BJ (cell line): ENCODE measurements at regions of chr10 and their contacts with region 1.

Region 1: DNA sequence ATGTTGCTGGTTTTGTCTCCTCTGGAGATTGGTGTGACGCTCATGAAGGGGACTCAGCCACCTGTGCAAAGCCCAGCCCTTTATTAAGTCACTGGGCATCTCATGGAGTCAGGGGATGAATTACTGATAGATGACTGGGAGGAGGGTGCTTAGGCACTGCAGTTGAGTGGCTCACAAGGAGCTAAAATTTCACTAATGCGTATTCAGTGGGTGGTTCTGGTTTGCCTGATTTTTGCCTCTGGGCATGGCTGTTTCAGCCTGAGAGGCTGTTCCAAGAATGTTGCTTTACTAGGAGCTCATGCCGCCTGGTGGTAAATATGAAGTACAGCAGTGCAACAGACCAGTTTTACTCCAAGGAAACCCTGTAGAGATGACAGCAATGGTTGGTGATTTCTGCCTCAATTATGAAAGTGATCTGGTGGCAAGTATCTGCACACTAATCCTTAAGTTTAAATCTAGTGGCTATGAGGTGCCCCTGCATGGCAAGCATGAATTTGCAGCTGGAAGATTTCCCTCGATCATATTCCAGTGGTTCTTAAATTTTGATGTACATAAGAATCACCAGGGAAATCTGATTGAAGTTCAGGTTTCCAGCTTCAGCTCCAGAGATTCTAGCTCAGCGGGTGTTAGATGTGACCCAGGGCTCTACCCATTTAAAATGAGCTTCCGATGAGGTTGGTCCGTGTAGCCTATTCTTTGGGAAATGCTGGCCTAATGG is 19.9 kb downstream of the ACTA2 start:
- DNase-seq: peak; percentile 71
- H3K4me3 ChIP-seq: no peak overlapping the region
- H3K27me3 ChIP-seq: no peaks in the 10 kb centered on the region
- CTCF ChIP-seq: peak; percentile 84

Region 2: GRCh38 chr10:88828310-88828709 is 104.4 kb before region 1 on chr10:
- CTCF ChIA-PET with region 1: interaction called, 512 read pairs
- POLR2A ChIA-PET with region 1: no interaction called
- DNase-seq: no peak
- H3K4me3 ChIP-seq: no peak overlapping the region
- H3K27me3 ChIP-seq: no peaks in the 10 kb centered on the region
- CTCF ChIP-seq: no peak

Region 3: GRCh38 chr10:88854684-88855083 is 78.0 kb before region 1 on chr10:
- CTCF ChIA-PET with region 1: interaction called, 12 read pairs
- POLR2A ChIA-PET with region 1: no interaction called
- DNase-seq: no peak
- H3K4me3 ChIP-seq: no peak overlapping the region
- H3K27me3 ChIP-seq: no peaks in the 10 kb centered on the region
- CTCF ChIP-seq: no peak

Region 4: DNA sequence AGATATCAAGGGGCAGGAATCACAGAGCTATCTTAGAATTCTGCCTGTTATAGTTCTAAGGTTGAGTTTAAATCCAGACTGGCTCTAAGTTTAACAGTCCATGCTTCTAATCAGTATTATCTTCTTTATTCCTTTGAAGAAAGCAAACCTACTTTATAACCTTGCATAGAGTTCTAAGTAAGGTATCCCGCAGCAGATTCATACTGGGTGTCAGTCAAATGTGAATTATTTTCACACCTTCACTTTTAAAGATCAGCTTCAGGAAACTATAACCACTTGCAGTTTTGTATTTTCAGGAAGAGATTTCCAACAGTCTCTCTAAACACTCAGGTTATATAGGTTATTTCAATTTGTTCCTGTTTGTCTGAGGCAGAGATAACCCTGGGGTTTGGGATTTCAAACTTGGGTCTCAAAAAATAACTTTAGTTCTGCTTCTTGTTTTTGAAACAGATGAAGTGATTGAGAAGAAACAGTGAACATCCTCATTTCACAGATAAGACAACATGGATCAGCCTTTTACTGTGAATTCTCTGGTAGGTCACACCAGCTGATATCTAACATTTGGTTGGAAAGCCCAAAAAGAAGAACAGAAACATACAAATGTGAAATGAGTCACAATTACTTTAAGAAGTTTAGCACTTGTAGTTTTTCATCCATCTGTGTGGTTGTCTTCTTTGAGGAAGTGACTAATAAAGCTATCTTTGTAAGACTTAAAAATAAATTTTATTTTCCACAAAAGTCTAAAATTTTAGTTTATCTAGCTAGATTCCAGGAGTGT is 31.3 kb before region 1 on chr10:
- CTCF ChIA-PET with region 1: interaction called, 14 read pairs
- POLR2A ChIA-PET with region 1: no interaction called
- DNase-seq: no peak
- H3K4me3 ChIP-seq: no peak overlapping the region
- H3K27me3 ChIP-seq: no peaks in the 10 kb centered on the region
- CTCF ChIP-seq: no peak

Region 5: DNA sequence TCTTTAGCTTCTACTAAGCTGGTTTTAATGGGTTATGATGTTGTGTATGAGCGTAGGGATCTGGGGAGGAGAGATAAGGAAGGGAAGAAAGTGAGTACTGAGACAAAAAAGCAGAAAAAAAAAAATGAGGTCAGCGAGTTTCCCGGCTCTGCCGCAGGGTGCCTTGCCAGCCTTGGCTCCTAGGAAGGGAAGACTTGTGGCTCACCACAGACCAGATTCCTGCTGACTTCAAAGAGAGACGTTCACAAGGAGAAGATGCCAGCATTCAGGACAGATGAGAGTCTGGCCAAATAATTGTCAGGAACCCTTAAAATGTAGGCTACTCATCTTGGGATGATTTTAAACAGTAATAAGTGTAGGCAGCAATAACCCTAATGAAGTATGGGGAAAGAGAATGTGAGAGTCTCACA is 46.5 kb after region 1 on chr10:
- CTCF ChIA-PET with region 1: interaction called, 18 read pairs
- POLR2A ChIA-PET with region 1: no interaction called
- DNase-seq: peak; percentile 47
- H3K4me3 ChIP-seq: no peak overlapping the region
- H3K27me3 ChIP-seq: no peaks in the 10 kb centered on the region
- CTCF ChIP-seq: no peak

Region 6: DNA sequence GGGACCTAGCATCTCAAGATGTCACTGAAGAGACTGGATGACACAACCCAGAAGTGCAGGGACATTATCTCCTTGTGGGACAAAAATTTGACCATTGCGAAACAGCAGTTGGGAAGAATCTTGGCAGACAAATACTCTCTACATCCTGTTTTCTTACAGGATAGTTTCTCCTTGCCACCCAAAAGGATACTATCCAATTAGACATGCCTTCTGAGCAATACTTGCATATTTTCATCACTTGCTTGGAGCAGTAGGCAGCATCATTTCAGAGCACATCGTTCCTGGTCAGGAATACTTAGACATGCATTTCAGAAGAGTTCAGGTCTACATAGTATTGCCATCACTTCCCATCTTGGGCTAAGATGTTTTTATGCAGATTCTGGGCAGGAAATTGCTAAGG is 114.7 kb after region 1 on chr10:
- CTCF ChIA-PET with region 1: no interaction called
- POLR2A ChIA-PET with region 1: interaction called, 10 read pairs
- DNase-seq: peak; percentile 6
- H3K4me3 ChIP-seq: no peak overlapping the region
- H3K27me3 ChIP-seq: no peaks in the 10 kb centered on the region
- CTCF ChIP-seq: no peak

Region 7: DNA sequence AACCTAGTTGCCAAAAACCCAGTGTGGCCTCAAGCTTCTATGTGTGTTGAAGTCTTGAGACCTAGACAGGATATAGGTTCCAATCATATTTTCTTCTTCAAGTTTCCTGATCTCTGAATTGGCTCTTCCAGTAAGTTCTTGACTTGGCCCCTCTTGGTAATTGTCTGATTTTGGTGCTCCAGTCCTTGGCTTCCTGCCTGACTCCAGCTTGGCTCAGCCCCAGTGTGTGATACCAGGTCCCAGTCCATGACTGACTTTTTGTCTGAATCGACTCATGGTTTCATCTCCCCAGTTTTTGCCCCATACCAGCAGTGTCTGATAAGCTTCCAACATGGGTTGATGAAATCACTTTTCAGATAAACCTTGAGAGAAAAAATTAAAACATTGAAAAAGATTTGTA is 130.2 kb after region 1 on chr10:
- CTCF ChIA-PET with region 1: no interaction called
- POLR2A ChIA-PET with region 1: no interaction called
- DNase-seq: no peak
- H3K4me3 ChIP-seq: no peak overlapping the region
- H3K27me3 ChIP-seq: no peaks in the 10 kb centered on the region
- CTCF ChIP-seq: no peak

Region 8: DNA sequence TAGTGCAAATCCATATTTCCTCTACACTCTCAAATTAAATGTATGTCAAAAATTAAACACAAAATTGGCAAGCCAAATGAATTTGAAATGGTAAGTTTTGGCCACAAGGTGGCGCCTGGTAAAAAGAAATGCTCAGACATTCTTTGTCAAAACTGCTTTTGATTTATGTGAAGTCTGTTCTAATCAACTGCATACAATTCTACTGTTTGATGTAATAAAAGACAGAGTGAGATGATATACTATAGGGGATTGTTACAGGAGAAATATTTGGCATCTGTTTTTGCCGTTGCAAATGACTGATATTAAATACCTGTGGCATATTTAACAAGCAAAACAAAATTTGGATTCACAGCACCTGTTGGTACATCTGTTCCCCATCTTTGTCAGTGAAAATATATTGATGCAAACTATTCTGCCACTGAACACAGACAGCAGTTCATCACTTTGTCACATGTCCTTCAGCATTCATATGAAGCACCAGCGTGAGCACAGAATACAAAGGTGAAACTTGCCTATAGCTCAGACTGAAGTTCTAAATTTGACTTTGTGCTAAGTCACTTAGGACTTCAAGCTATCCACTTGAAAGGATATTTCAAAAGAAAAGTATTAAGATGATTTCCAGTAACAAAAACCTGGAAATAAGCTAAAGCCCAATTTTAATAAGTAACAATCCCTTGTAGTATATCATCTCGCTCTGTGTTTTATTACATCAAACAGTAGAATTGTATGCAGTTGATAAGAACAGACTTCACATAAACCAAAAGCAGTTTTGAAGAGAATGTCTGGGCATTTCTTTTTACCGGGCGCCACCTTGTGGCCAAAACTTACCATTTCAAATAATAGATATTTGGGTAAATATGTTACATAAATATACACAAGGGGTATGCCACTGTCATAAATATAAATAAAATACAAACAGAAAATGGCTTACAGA is 284.6 kb after region 1 on chr10:
- CTCF ChIA-PET with region 1: interaction called, 42 read pairs
- POLR2A ChIA-PET with region 1: no interaction called
- DNase-seq: no peak
- H3K4me3 ChIP-seq: no peak overlapping the region
- H3K27me3 ChIP-seq: no peaks in the 10 kb centered on the region
- CTCF ChIP-seq: peak; percentile 69